Heart right ventricle (tissue), 16 donors: ENCODE measurements at regions of chr12 and their contacts with region 1.

Region 1: GRCh38 chr12:20000229-20000869 is 368.0 kb upstream of the PDE3A start:
- DNase-seq: no peak
- ATAC-seq: peak; percentile 25 to 90 (median 77)
- H3K4me3 ChIP-seq: no peak overlapping the region
- H3K27ac ChIP-seq: peak overlapping the region; percentile 16 to 68 (median 53)
- H3K4me1 ChIP-seq: peaks cover 0 to 16% (median 4%) of the 10 kb centered on the region in 9 donors
- H3K27me3 ChIP-seq: no peaks in the 10 kb centered on the region
- CTCF ChIP-seq: no peak

Region 2: GRCh38 chr12:19390051-19390598 is 610.2 kb before region 1 on chr12:
- intact Hi-C with region 1: no loop called
- DNase-seq: no peak
- ATAC-seq: no peak
- H3K4me3 ChIP-seq: no peak overlapping the region
- H3K27ac ChIP-seq: no peak overlapping the region
- H3K4me1 ChIP-seq: peaks cover 0 to 6% (median 0%) of the 10 kb centered on the region in 9 donors
- H3K27me3 ChIP-seq: no peaks in the 10 kb centered on the region
- CTCF ChIP-seq: no peak

Region 3: GRCh38 chr12:19719672-19720071 is 280.7 kb before region 1 on chr12:
- intact Hi-C with region 1: no loop called
- DNase-seq: no peak
- ATAC-seq: no peak
- H3K4me3 ChIP-seq: no peak overlapping the region
- H3K27ac ChIP-seq: no peak overlapping the region
- H3K4me1 ChIP-seq: peaks cover 0 to 4% (median 0%) of the 10 kb centered on the region in 9 donors
- H3K27me3 ChIP-seq: no peaks in the 10 kb centered on the region
- CTCF ChIP-seq: no peak

Region 4: DNA sequence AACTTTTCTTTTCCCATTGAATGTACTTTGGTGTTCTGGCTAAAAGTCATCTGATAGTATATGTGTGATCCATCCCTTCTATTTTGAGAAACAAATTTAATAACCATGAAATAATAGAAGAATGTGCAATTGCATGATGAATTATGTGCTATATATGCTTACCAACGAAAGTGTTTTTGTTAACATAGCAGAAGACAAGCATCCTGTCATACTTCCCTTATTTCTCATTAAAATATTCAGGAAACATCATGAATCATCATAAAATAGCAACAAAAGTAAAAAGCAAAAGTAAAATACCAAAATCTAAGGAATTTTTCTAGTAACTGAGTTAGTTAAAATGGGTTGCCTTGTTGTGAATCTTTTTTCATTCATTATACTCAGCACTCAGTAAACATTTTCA is 41.0 kb before region 1 on chr12:
- intact Hi-C with region 1: loop called in 1 of 10 experiments (anchors 5 kb)
- DNase-seq: no peak
- ATAC-seq: no peak
- H3K4me3 ChIP-seq: no peak overlapping the region
- H3K27ac ChIP-seq: no peak overlapping the region
- H3K4me1 ChIP-seq: peaks cover 0 to 12% (median 0%) of the 10 kb centered on the region in 9 donors
- H3K27me3 ChIP-seq: no peaks in the 10 kb centered on the region
- CTCF ChIP-seq: no peak